T-cell (primary cell): ENCODE measurements at regions of chr1 and their contacts with region 1.

Region 1: DNA sequence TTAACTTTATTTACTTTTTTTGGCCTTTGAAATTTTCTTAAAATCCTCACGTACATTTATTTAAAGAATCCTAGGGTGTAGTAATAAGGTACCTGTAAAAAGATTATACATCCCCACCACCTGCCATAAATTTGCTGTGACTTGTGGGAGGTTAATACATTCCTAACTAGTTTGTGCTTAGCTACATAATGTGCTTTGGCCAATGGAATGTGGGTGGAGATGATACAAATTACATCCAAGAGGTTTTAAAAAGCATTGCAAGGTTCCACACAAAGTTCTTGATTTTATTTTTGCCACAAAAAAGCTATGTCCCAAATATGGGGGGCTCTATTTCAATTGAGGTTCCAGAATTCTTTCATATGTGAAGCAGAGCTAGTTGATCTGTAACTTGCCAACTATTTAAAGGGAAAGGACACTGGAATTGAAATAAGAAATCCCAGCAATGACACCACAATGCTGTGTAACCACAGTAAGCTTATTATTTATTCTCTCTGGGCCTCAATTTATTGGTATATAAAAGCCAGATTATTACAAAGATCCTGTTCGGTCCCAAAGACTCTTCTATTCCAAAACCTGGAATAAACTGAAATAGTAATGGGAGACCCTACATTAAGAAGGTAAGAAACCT is 15.7 kb downstream of the ASPM start:
- DNase-seq: no peak
- ATAC-seq: no peak
- H3K4me3 ChIP-seq: no peak overlapping the region
- H3K4me3 Mint-ChIP-seq: no peak overlapping the region
- H3K27ac ChIP-seq: no peak overlapping the region
- H3K27ac Mint-ChIP-seq: no peak overlapping the region
- H3K4me1 ChIP-seq: no peaks in the 10 kb centered on the region
- H3K4me1 Mint-ChIP-seq: peaks cover 0 to 1% (median 0%) of the 10 kb centered on the region in 3 donors
- H3K27me3 ChIP-seq: no peaks in the 10 kb centered on the region
- H3K27me3 Mint-ChIP-seq: no peaks in the 10 kb centered on the region

Region 2: GRCh38 chr1:196897158-196897828 is 233.5 kb before region 1 on chr1:
- CTCF ChIA-PET with region 1: no interaction called
- POLR2A ChIA-PET with region 1: no interaction called
- DNase-seq: no peak
- ATAC-seq: no peak
- H3K4me3 ChIP-seq: no peak overlapping the region
- H3K4me3 Mint-ChIP-seq: no peak overlapping the region
- H3K27ac ChIP-seq: no peak overlapping the region
- H3K27ac Mint-ChIP-seq: no peak overlapping the region
- H3K4me1 ChIP-seq: no peaks in the 10 kb centered on the region
- H3K4me1 Mint-ChIP-seq: no peaks in the 10 kb centered on the region
- H3K27me3 ChIP-seq: peaks cover 0 to 5% of the 10 kb centered on the region in 2 experiments
- H3K27me3 Mint-ChIP-seq: peaks cover 18 to 21% of the 10 kb centered on the region in 2 donors

Region 3: DNA sequence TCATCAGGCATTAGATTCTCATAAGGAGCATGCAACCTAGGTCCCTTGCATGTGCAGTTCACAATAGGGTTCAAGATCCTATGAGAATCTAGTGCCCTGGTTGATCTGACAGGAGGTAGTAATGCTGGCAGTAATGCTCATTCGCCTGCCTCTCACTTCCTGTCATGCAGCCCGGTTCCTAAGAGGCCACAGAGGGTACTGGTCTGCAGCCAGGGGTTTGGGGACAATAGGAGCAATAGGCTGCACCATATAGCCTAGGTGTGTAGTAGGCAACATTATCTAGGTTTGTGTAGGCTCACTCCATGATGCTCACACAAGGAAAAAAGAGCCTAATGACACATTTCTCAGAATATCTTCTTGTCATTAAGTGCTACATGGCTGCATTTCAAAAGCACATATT is 127.7 kb before region 1 on chr1:
- CTCF ChIA-PET with region 1: no interaction called
- POLR2A ChIA-PET with region 1: no interaction called
- DNase-seq: no peak
- ATAC-seq: no peak
- H3K4me3 ChIP-seq: no peak overlapping the region
- H3K4me3 Mint-ChIP-seq: no peak overlapping the region
- H3K27ac ChIP-seq: no peak overlapping the region
- H3K27ac Mint-ChIP-seq: no peak overlapping the region
- H3K4me1 ChIP-seq: no peaks in the 10 kb centered on the region
- H3K4me1 Mint-ChIP-seq: no peaks in the 10 kb centered on the region
- H3K27me3 ChIP-seq: no peaks in the 10 kb centered on the region
- H3K27me3 Mint-ChIP-seq: no peaks in the 10 kb centered on the region

Region 4: DNA sequence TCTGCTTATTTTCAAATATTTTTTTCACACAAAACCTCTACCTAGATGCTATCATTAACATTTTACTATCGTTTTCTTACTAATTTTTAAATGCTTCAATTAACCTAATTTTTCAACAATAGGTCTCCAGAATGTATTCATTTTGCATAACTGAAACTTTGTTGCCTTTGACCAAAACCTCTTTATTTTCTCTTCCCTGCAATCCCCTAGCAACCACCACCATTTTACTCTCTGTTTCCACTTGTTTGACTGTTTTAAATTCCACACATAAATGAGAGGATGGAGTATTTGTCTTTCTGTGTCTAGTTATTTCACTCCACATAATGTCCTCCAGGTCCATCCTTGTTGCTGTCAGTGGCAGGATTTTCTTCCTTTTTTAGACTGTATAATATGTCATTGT is 54.2 kb before region 1 on chr1:
- CTCF ChIA-PET with region 1: no interaction called
- POLR2A ChIA-PET with region 1: no interaction called
- DNase-seq: no peak
- ATAC-seq: no peak
- H3K4me3 ChIP-seq: no peak overlapping the region
- H3K4me3 Mint-ChIP-seq: no peak overlapping the region
- H3K27ac ChIP-seq: no peak overlapping the region
- H3K27ac Mint-ChIP-seq: no peak overlapping the region
- H3K4me1 ChIP-seq: no peaks in the 10 kb centered on the region
- H3K4me1 Mint-ChIP-seq: no peaks in the 10 kb centered on the region
- H3K27me3 ChIP-seq: no peaks in the 10 kb centered on the region
- H3K27me3 Mint-ChIP-seq: no peaks in the 10 kb centered on the region

Region 5: DNA sequence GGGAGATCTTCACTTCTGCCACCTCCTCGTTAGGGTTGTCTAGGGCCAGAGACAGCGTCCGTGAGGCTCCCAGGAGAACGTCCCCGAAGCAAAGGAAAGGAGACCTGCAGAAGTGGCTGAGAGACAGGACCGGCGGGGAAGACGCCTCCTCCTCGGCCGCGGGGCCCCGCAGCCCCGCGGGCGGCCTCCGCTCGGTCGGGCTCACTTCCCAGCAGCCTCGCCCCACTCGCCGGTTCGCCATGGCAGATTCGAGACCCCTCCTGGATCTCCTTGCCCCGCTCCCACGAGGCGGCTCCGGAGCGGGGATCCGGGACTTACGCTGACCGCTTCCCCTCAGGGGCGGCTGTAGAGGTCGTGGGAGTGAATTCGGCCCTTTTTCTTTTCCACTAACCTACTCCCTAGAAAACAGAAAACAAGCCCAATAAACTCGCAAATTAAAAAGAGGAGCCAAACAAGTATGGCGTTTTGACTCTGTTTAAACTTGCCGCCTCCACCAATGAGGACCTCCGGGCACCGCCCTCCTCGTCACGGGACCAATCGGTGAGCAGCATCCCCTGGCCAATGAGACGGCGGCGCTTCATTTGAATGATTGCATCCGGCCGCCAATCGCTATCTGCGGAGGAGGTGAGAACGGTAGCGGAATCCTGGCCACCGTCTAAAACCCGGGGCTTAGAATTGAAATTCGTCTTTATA is 15.6 kb after region 1 on chr1 and contains the start of gene ASPM:
- CTCF ChIA-PET with region 1: no interaction called
- POLR2A ChIA-PET with region 1: no interaction called
- DNase-seq: peak; percentile 84 to 97 (median 95)
- ATAC-seq: peak; percentile 99
- H3K4me3 ChIP-seq: peak within 1 kb of the TSS; percentile 84 to 95
- H3K4me3 Mint-ChIP-seq: peak within 1 kb of the TSS; percentile 84 to 88 (median 85)
- H3K27ac ChIP-seq: peak within 1 kb of the TSS; percentile 69
- H3K27ac Mint-ChIP-seq: peak within 1 kb of the TSS; percentile 88 to 92
- H3K4me1 ChIP-seq: peaks cover 8 to 10% of the 10 kb centered on the region in 2 experiments
- H3K4me1 Mint-ChIP-seq: peaks cover 11 to 32% (median 32%) of the 10 kb centered on the region in 3 donors
- H3K27me3 ChIP-seq: peaks cover 0 to 4% of the 10 kb centered on the region in 2 experiments
- H3K27me3 Mint-ChIP-seq: peaks cover 0 to 4% of the 10 kb centered on the region in 2 donors
- total RNA-seq, gene ASPM: 0.41 to 0.93 (median 0.44) TPM

Region 6: GRCh38 chr1:198967566-198967965 is 1836.8 kb after region 1 on chr1:
- CTCF ChIA-PET with region 1: no interaction called
- POLR2A ChIA-PET with region 1: interaction called in 1 of 2 experiments, 10 read pairs
- DNase-seq: no peak
- ATAC-seq: no peak
- H3K4me3 ChIP-seq: no peak overlapping the region
- H3K4me3 Mint-ChIP-seq: peak overlapping the region in 1 of 3 donors; percentile 28
- H3K27ac ChIP-seq: no peak overlapping the region
- H3K27ac Mint-ChIP-seq: no peak overlapping the region
- H3K4me1 ChIP-seq: peaks cover 5 to 17% of the 10 kb centered on the region in 2 experiments
- H3K4me1 Mint-ChIP-seq: peaks cover 26 to 38% (median 26%) of the 10 kb centered on the region in 3 donors
- H3K27me3 ChIP-seq: no peaks in the 10 kb centered on the region
- H3K27me3 Mint-ChIP-seq: no peaks in the 10 kb centered on the region